ENCODE measurements at regions of chr2 and their contacts with region 1.

Region 1: DNA sequence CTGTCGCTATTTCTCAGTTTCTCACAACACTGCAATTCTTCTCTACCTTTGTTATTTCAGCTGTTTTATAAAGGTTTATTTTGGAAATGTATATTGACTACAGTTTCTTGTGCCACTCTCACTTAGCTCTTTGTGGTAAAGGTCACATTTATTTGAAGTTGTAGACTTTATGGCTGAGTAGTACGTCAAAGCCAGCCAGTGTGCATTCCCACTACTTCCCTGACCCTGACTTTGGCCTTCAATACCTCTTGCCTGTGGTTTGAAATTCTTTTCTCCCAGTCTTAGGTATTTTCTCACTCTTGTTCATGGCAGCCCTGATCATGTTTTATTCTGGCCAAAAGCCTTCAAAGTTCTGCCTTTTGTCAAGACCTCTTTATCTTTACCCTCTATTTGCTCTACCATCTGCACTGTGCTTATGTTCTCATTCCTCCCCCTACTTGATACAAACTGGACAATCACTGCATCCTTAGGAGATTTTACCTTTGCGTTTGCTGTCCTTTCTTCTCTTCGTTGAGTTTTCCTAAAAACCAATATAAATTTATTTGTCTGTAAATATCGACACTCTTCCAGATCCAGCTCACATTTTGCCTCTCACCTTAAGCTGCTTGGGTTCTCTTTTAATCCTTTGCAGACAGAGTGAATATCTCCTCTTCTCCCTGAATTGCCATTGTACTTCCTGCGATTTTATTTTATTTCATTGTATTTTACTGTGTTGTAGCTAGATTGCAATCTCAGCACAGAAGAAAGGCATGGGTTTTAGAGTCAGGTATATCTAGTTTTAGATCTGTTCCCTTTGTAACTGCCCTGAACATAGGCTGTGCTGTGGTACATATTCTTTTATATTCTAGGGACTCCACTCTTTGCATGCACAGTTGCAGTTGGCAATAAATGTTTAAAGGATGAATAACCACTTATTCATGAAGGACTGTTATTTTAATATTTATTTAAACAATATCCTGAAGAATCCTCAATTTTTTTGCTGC is 31.2 kb downstream of the GULP1 start:
- DNase-seq: peak; percentile 60
- H3K4me3 ChIP-seq: no peak overlapping the region
- H3K27ac ChIP-seq: peak overlapping the region; percentile 50
- H3K4me1 ChIP-seq: peaks cover 65% of the 10 kb centered on the region
- H3K27me3 ChIP-seq: no peaks in the 10 kb centered on the region
- CTCF ChIP-seq: no peak
- POLR2A ChIP-seq: no peak

Region 2: GRCh38 chr2:188381614-188382013 is 58.8 kb after region 1 on chr2:
- CTCF ChIA-PET with region 1: no interaction called
- POLR2A ChIA-PET with region 1: no interaction called
- dilution Hi-C with region 1: no loop called
- intact Hi-C with region 1: loop called (anchors 2 kb)
- DNase-seq: peak; percentile 83
- H3K4me3 ChIP-seq: peak overlapping the region in 1 of 3 experiments; percentile 12
- H3K27ac ChIP-seq: peak overlapping the region; percentile 73
- H3K4me1 ChIP-seq: peaks cover 28% of the 10 kb centered on the region
- H3K27me3 ChIP-seq: no peaks in the 10 kb centered on the region
- CTCF ChIP-seq: no peak
- POLR2A ChIP-seq: no peak